ENCODE measurements at regions of chr2 and their contacts with region 1.

Region 1: GRCh38 chr2:205051417-205051816 is 506.1 kb downstream of the PARD3B start:
- DNase-seq: no peak
- H3K4me3 Mint-ChIP-seq: no peak overlapping the region
- H3K27ac Mint-ChIP-seq: no peak overlapping the region
- H3K4me1 Mint-ChIP-seq: peaks cover 21% of the 10 kb centered on the region
- H3K27me3 Mint-ChIP-seq: no peaks in the 10 kb centered on the region

Region 2: DNA sequence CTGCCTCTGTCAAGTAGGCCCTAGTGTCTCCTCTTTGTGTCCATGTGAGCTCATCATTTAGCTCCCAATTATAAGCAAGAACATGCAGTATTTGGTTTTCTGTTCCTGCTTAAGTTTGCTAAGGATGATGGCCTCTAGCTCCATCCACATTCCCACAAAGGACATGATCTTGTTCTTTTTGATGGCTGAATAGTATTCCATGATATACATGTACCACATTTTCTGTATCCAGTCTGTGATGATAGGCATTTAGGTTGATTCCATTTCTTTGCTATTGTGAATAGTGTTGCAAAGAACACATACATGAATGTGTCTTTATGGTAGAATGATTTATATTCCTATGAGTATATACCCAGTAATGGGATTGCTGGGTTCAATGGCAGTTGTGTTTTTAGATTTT is 242.9 kb before region 1 on chr2:
- intact Hi-C with region 1: no loop called
- DNase-seq: no peak
- H3K4me3 Mint-ChIP-seq: no peak overlapping the region
- H3K27ac Mint-ChIP-seq: no peak overlapping the region
- H3K4me1 Mint-ChIP-seq: peaks cover 9% of the 10 kb centered on the region
- H3K27me3 Mint-ChIP-seq: peaks cover 9% of the 10 kb centered on the region

Region 3: GRCh38 chr2:205115511-205115910 is 64.1 kb after region 1 on chr2:
- intact Hi-C with region 1: loop called (anchors 10 kb)
- DNase-seq: no peak
- H3K4me3 Mint-ChIP-seq: no peak overlapping the region
- H3K27ac Mint-ChIP-seq: no peak overlapping the region
- H3K4me1 Mint-ChIP-seq: peaks cover 18% of the 10 kb centered on the region
- H3K27me3 Mint-ChIP-seq: peaks cover 2% of the 10 kb centered on the region

Measured in activated T-helper 2 cell treated with anti-CD3 and anti-CD28 coated beads, Interferon-gamma antibody, Interleukin-2, Interleukin-4, amounts not matched to agents 10 μg/mL and 5 μg/mL and 100 μg/mL, durations not matched to agents 14 hours and 24 hours and 36 hours (primary cell).